K562 (cell line): ENCODE measurements at regions of chr1 and their contacts with region 1.

Region 1: GRCh38 chr1:217647791-217648190 is 16.6 kb downstream of the SPATA17 start:
- DNase-seq: no peak
- ATAC-seq: no peak
- H3K4me3 ChIP-seq: no peak overlapping the region
- H3K27ac ChIP-seq: no peak overlapping the region
- H3K4me1 ChIP-seq: no peaks in the 10 kb centered on the region
- H3K27me3 ChIP-seq: no peaks in the 10 kb centered on the region
- CTCF ChIP-seq: no peak
- EP300 ChIP-seq: no peak
- POLR2A ChIP-seq: no peak
- RAD21 ChIP-seq: no peak

Region 2: DNA sequence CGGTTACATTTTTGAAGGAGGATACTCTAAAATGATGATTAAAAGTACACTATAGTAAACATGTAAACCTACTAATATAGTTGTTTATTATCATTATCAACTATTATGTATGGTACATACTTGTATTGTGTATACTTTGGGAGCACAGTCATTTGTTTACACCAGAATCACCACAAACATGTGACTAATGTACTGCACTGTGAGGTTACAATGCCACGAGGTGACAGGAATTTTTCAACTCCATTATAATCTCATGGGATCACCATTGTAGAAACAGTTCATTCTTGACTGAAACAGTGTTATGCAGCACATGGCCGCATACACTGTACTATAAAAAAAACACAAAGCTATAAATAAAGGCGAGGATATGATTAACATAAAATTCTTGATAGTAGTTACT is 61.2 kb before region 1 on chr1:
- CTCF ChIA-PET with region 1: no interaction called
- POLR2A ChIA-PET with region 1: no interaction called
- in situ Hi-C with region 1: no loop called
- intact Hi-C with region 1: loop called (anchors 10 kb)
- DNase-seq: no peak
- ATAC-seq: no peak
- H3K4me3 ChIP-seq: no peak overlapping the region
- H3K27ac ChIP-seq: no peak overlapping the region
- H3K4me1 ChIP-seq: no peaks in the 10 kb centered on the region
- H3K27me3 ChIP-seq: no peaks in the 10 kb centered on the region
- CTCF ChIP-seq: no peak
- EP300 ChIP-seq: no peak
- POLR2A ChIP-seq: no peak
- RAD21 ChIP-seq: no peak